ENCODE measurements at regions of chr10 and their contacts with region 1.

Region 1: DNA sequence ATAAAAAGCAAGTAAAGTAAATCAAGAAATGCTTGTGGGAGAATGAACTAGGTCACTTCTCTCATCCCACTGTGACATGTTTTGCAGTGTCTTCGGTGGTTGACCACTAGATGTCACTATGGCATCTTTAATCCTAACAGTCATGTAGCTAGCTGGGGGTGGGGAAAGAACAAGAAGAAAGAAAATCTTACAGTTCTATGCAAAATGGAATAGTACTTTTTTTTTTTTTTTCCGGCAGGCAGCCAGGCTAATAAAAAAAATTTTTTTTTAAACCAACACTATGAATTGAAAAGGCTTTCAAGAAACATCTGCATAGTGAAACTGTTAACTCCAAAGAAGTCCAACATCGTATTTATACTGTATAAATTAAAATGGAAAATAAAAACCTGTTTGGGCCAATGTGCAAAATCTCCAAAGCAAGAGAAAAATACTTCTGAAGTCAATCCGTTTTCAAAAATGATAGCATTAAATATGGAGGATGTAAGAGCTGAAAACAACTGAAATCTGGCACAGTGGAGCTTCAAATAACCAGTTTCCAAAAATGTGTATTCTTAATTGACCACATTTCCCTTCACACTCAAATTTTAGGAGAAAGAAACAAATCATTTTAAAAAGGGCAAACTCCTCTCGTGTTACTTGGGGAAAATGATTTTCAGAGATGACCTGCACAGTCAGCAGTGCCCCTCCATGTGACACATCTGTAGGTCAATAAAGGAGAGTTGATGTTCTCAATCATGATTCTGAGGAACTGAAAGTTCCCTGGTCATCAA is 38.5 kb downstream of the CDK1 start:
- DNase-seq: peak; percentile 90
- ATAC-seq: peak; percentile 91
- H3K4me3 ChIP-seq: no peak overlapping the region
- H3K27ac ChIP-seq: no peak overlapping the region
- H3K4me1 ChIP-seq: peaks cover 13% of the 10 kb centered on the region
- H3K27me3 ChIP-seq: no peaks in the 10 kb centered on the region
- CTCF ChIP-seq: peak; percentile 91
- POLR2A ChIP-seq: peak; percentile 44; the same call in 1 of the 2 replicates
- RAD21 ChIP-seq: peak; percentile 94

Region 2: DNA sequence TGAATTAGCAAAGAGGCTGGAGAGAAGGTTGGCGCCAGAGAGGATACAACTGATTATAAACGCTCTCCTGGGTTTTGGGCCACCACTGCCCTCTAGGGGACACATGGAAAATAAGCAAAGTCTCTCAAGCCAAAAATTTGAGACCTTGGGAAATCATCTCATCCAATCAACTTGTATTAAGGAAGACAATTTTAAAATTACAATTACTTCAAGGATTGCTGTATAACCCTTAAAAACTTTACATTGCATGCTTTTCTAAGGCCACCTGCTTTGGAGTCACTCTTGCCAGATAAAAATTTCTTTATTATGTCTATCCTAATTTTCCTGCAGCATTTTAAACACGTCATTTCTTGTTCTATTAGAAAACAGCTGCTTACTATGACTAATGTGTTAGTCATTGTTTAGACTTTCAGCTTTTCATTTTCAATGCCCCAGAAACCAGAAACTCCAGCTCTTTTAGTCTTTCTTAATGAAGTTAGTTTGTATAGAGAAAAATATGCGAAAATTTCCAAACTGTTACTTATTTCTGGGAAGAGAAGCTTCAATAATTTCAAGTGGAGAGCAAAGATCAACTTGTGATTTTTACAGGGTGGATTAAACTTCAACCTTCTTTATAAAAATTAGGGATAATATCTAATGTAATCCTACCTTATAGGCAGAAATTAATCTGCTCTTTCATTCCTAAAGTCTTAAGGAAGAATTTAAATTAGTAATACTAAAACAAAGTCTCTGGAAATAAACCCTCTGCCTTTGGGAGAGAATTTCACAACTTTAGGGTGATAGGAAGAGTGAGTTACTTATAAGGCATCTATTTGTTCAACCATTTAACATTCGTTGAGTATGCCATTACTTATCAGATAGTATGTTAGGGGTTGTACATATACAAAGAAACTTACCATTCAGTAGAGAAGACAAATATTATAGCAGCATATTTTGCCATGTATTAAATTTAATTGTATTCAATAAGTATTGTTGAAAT is 147.7 kb after region 1 on chr10:
- CTCF ChIA-PET with region 1: interaction called, 7 read pairs
- POLR2A ChIA-PET with region 1: no interaction called
- dilution Hi-C with region 1: no loop called
- in situ Hi-C with region 1: loop called (anchors 5 kb)
- intact Hi-C with region 1: loop called (anchors 1 kb)
- DNase-seq: peak; percentile 91
- ATAC-seq: peak; percentile 76
- H3K4me3 ChIP-seq: no peak overlapping the region
- H3K27ac ChIP-seq: peak overlapping the region; percentile 49; the same call in 1 of the 2 replicates
- H3K4me1 ChIP-seq: peaks cover 4% of the 10 kb centered on the region; the same call in 1 of the 2 replicates
- H3K27me3 ChIP-seq: no peaks in the 10 kb centered on the region
- CTCF ChIP-seq: peak; percentile 88
- POLR2A ChIP-seq: no peak
- RAD21 ChIP-seq: peak; percentile 78

Region 3: DNA sequence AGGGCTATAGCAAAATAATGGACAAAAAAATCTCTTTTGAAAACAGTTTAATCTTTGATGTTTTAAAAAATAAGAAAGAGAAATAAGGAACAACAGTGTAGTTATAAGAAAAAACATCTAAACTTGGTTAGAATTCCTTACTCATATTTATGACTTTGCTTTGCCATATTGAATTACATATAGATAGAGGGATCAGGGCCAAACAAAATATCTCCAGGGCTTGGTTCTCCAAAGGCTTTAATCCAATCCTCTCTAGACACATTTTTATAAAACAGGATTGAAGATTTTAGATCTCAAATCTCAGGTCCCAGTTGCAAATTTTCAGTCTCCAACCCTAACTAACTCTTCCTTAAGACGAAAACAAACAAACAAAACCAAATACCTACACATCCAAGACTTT is 199.8 kb after region 1 on chr10:
- CTCF ChIA-PET with region 1: no interaction called
- POLR2A ChIA-PET with region 1: no interaction called
- dilution Hi-C with region 1: no loop called
- in situ Hi-C with region 1: no loop called
- intact Hi-C with region 1: no loop called
- DNase-seq: no peak
- ATAC-seq: no peak
- H3K4me3 ChIP-seq: no peak overlapping the region
- H3K27ac ChIP-seq: no peak overlapping the region
- H3K4me1 ChIP-seq: no peaks in the 10 kb centered on the region
- H3K27me3 ChIP-seq: peaks cover 1% of the 10 kb centered on the region
- CTCF ChIP-seq: no peak
- POLR2A ChIP-seq: no peak
- RAD21 ChIP-seq: no peak

Region 4: GRCh38 chr10:61189912-61190311 is 373.1 kb after region 1 on chr10:
- CTCF ChIA-PET with region 1: no interaction called
- POLR2A ChIA-PET with region 1: no interaction called
- dilution Hi-C with region 1: no loop called
- in situ Hi-C with region 1: no loop called
- intact Hi-C with region 1: loop called (anchors 1 kb)
- DNase-seq: no peak
- ATAC-seq: no peak
- H3K4me3 ChIP-seq: no peak overlapping the region
- H3K27ac ChIP-seq: no peak overlapping the region
- H3K4me1 ChIP-seq: no peaks in the 10 kb centered on the region
- H3K27me3 ChIP-seq: no peaks in the 10 kb centered on the region
- CTCF ChIP-seq: no peak
- POLR2A ChIP-seq: no peak
- RAD21 ChIP-seq: no peak

Region 5: GRCh38 chr10:61486738-61487396 is 670.1 kb after region 1 on chr10:
- CTCF ChIA-PET with region 1: no interaction called
- POLR2A ChIA-PET with region 1: no interaction called
- dilution Hi-C with region 1: no loop called
- in situ Hi-C with region 1: no loop called
- intact Hi-C with region 1: loop called (anchors 10 kb)
- DNase-seq: peak; percentile 52
- ATAC-seq: peak; percentile 66
- H3K4me3 ChIP-seq: no peak overlapping the region
- H3K27ac ChIP-seq: no peak overlapping the region
- H3K4me1 ChIP-seq: no peaks in the 10 kb centered on the region
- H3K27me3 ChIP-seq: no peaks in the 10 kb centered on the region
- CTCF ChIP-seq: no peak
- POLR2A ChIP-seq: no peak
- RAD21 ChIP-seq: no peak

Region 6: GRCh38 chr10:61835069-61835945 is 1018.5 kb after region 1 on chr10:
- CTCF ChIA-PET with region 1: no interaction called
- POLR2A ChIA-PET with region 1: no interaction called
- dilution Hi-C with region 1: no loop called
- in situ Hi-C with region 1: no loop called
- intact Hi-C with region 1: loop called (anchors 2 kb)
- DNase-seq: peak; percentile 78
- ATAC-seq: peak; percentile 59
- H3K4me3 ChIP-seq: no peak overlapping the region
- H3K27ac ChIP-seq: peak overlapping the region; percentile 39; the same call in 1 of the 2 replicates
- H3K4me1 ChIP-seq: peaks cover 14% of the 10 kb centered on the region
- H3K27me3 ChIP-seq: no peaks in the 10 kb centered on the region
- CTCF ChIP-seq: peak; percentile 50
- POLR2A ChIP-seq: no peak
- RAD21 ChIP-seq: peak; percentile 62

Region 7: DNA sequence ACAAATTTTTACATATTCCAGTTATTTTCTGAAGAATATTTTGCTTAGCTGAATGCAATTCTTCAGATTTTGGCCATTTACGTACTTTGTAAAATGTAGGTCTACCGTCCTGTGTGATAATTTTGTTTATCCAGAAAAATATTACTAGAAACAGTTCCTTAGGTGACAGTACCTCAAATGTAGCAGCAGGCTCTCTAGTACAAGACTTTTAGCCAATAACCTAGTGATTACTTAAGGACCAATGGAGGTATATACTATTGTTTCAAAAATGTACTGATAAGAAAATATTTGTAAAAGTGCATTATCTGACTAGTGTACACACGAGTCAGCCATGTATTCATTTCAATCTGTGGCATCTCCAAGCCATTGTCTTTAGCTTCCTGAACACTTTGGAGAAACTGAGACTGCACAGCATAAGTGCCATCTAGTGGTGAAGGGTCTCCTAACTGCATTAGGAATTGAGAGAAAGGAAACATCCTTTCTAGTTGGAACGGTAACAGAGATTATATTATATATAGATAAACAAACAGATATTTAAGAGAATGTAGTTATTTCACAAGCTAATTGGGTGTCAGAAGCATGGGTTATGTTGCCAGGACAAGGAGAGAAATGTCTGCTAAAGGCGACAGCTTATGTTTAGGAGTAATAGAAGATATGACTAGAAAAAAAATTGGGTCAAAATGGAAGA is 1428.1 kb after region 1 on chr10:
- CTCF ChIA-PET with region 1: no interaction called
- POLR2A ChIA-PET with region 1: no interaction called
- dilution Hi-C with region 1: no loop called
- in situ Hi-C with region 1: loop called (anchors 25 kb)
- intact Hi-C with region 1: no loop called
- DNase-seq: peak; percentile 83
- ATAC-seq: peak; percentile 63
- H3K4me3 ChIP-seq: no peak overlapping the region; the same call in 1 of the 2 replicates
- H3K27ac ChIP-seq: peak overlapping the region; percentile 92
- H3K4me1 ChIP-seq: peaks cover 6% of the 10 kb centered on the region
- H3K27me3 ChIP-seq: no peaks in the 10 kb centered on the region
- CTCF ChIP-seq: peak; percentile 88
- POLR2A ChIP-seq: no peak
- RAD21 ChIP-seq: peak; percentile 93

Measured in IMR-90 (cell line).